Caco-2 (cell line): ENCODE measurements at regions of chr15 and their contacts with region 1.

Region 1: DNA sequence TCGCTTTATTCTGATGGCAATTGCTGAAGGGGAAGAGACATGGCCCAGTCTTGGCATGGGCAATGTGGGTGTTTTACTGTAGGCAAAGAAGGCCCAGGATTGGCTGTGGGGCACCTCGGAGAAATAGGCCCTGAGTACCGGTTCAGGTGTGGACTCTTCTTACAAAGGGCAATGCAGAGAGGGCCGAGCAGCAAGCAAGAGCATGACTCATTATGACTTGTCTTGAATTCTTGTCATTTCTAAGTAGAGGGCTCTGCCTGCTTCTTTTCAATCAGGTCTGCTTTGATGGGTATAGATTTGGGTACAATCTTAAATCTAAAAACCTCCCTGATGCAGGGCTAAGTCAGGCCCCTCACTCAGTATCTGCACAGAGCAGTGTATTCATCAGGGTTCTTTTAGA is 14.8 kb upstream of the BUB1B start:
- DNase-seq: no peak
- H3K4me3 ChIP-seq: no peak overlapping the region
- H3K4me3 Mint-ChIP-seq: no peak overlapping the region
- H3K27ac Mint-ChIP-seq: no peak overlapping the region
- H3K4me1 ChIP-seq: no peaks in the 10 kb centered on the region
- H3K4me1 Mint-ChIP-seq: no peaks in the 10 kb centered on the region
- H3K27me3 ChIP-seq: no peaks in the 10 kb centered on the region
- H3K27me3 Mint-ChIP-seq: no peaks in the 10 kb centered on the region
- CTCF ChIP-seq: no peak

Region 2: GRCh38 chr15:40010686-40011085 is 135.4 kb before region 1 on chr15:
- CTCF ChIA-PET with region 1: no interaction called
- POLR2A ChIA-PET with region 1: no interaction called
- intact Hi-C with region 1: no loop called
- DNase-seq: no peak
- H3K4me3 ChIP-seq: no peak overlapping the region
- H3K4me3 Mint-ChIP-seq: no peak overlapping the region
- H3K27ac Mint-ChIP-seq: no peak overlapping the region
- H3K4me1 ChIP-seq: no peaks in the 10 kb centered on the region
- H3K4me1 Mint-ChIP-seq: peaks cover 4% of the 10 kb centered on the region
- H3K27me3 ChIP-seq: no peaks in the 10 kb centered on the region
- H3K27me3 Mint-ChIP-seq: no peaks in the 10 kb centered on the region
- CTCF ChIP-seq: no peak

Region 3: GRCh38 chr15:40108855-40109735 is 36.9 kb before region 1 on chr15 and contains the start of gene BMF:
- CTCF ChIA-PET with region 1: no interaction called
- POLR2A ChIA-PET with region 1: no interaction called
- intact Hi-C with region 1: no loop called
- DNase-seq: peak; percentile 98 to 99
- H3K4me3 ChIP-seq: peak within 1 kb of the TSS; percentile 61
- H3K4me3 Mint-ChIP-seq: peak within 1 kb of the TSS; percentile 93
- H3K27ac Mint-ChIP-seq: peak within 1 kb of the TSS; percentile 96
- H3K4me1 ChIP-seq: peaks cover 34% of the 10 kb centered on the region
- H3K4me1 Mint-ChIP-seq: peaks cover 34% of the 10 kb centered on the region
- H3K27me3 ChIP-seq: no peaks in the 10 kb centered on the region
- H3K27me3 Mint-ChIP-seq: no peaks in the 10 kb centered on the region
- CTCF ChIP-seq: peak; percentile 33 to 54
- total RNA-seq, gene BMF: 78.2 and 81.5 TPM in 2 replicates

Region 4: GRCh38 chr15:40183636-40184463 is 37.8 kb after region 1 on chr15:
- CTCF ChIA-PET with region 1: no interaction called
- POLR2A ChIA-PET with region 1: interaction called, 10 read pairs
- intact Hi-C with region 1: no loop called
- DNase-seq: no peak
- H3K4me3 ChIP-seq: no peak overlapping the region
- H3K4me3 Mint-ChIP-seq: no peak overlapping the region
- H3K27ac Mint-ChIP-seq: no peak overlapping the region
- H3K4me1 ChIP-seq: no peaks in the 10 kb centered on the region
- H3K4me1 Mint-ChIP-seq: no peaks in the 10 kb centered on the region
- H3K27me3 ChIP-seq: no peaks in the 10 kb centered on the region
- H3K27me3 Mint-ChIP-seq: no peaks in the 10 kb centered on the region
- CTCF ChIP-seq: no peak